Left cardiac atrium (tissue), 4 donors: ENCODE measurements at regions of chr3 and their contacts with region 1.

Region 1: GRCh38 chr3:155690921-155691320 is 54.0 kb downstream of the PLCH1 start:
- DNase-seq: no peak
- ATAC-seq: no peak

Region 2: GRCh38 chr3:154334973-154335420 is 1355.9 kb before region 1 on chr3:
- intact Hi-C with region 1: loop called in 1 of 2 experiments (anchors 10 kb)
- DNase-seq: no peak
- ATAC-seq: no peak

Region 3: DNA sequence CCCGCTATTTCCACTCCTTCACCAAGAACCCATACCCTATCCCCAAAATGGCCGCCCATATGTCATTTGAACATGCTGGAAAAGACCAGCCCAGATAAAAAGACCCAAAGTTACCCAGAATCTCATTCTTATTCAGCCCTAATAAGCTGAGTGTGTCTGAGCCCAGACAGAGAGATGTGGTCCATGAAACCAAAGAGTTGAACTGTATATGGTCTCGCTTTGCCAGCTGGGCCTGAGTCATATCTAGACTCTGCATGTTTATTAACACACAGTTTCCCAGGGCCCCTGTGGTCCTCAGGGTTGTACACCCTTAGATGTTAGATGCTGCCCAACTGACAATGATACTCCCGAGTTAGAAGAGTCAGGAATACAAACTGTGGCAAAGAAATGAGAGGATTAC is 195.5 kb before region 1 on chr3:
- intact Hi-C with region 1: no loop called
- DNase-seq: no peak
- ATAC-seq: peak in 1 of 2 donors; percentile 40

Region 4: DNA sequence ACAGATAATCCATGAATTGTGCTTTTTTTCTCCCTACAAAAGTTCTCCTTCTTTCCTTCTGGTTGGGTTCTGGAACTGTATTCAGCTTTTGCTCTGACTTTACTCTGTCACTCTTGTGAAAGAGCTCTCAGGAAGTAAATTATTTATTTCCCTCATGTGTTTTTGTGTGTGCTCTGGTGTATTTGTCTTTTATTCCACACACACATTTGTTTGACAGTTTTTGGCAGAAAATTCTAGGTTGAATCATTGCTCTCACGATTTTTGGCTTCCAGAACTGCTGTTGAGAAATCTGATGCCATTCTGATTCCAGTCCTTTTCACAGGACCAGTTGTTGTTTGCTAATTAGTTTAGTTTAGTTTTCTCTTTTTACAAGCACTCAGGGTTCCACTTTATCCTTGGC is 118.8 kb before region 1 on chr3:
- intact Hi-C with region 1: no loop called
- DNase-seq: no peak
- ATAC-seq: peak; percentile 36 to 53

Region 5: GRCh38 chr3:155651489-155652218 is 39.3 kb before region 1 on chr3:
- intact Hi-C with region 1: no loop called
- DNase-seq: no peak
- ATAC-seq: no peak

Region 6: GRCh38 chr3:155995525-155996351 is 304.8 kb after region 1 on chr3:
- intact Hi-C with region 1: no loop called
- DNase-seq: no peak
- ATAC-seq: peak in 1 of 2 donors; percentile 54